GM12878 (cell line): ENCODE measurements at regions of chr1 and their contacts with region 1.

Region 1: DNA sequence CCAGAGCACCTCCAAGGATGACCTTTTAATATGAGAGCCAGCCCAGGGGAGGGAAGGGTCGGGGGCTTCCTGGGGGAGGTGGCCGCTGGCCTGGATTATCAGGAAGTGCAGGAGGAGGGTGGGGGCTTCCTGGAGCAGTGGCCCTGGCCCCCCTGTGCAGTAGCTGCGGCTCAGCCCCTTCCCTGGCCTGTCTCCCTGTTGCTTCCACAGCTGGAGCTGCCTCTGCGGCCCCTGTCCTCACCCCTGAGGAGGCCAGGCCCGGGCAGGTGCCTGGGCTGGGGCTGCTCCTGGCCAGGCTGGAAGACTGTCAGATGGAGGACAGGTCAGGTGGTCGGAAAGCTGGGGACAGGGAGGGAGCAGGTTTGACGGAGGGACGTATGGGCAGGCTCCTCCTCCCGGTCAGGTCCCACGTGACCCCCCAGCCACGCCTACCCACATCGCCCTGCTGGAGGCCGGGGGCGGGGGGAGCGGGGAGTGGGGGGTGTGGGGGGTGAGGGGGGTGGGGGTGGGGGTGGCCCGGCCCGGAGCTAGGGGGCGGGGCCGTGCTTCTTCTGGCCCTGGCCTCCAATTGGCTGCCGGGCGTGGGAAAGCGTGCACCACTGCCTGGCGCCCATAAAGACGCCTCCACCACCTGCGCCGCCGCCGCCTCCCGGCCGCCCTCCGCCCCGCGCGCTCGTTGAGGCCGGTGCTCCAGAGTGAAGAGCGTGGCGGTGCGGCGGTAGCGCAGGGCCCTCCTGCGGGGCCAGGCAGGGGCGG is 10.2 kb upstream of the TNFRSF14 start:
- DNase-seq: peak; percentile 80
- ATAC-seq: peak; percentile 61
- H3K4me3 ChIP-seq: peak overlapping the region; percentile 82; the same call in 1 of the 2 replicates
- H3K27ac ChIP-seq: peak overlapping the region; percentile 96
- H3K4me1 ChIP-seq: peaks cover 31% of the 10 kb centered on the region
- H3K27me3 ChIP-seq: no peaks in the 10 kb centered on the region
- CTCF ChIP-seq: no peak
- EP300 ChIP-seq: no peak
- POLR2A ChIP-seq: peak; percentile 96
- RAD21 ChIP-seq: no peak

Region 2: GRCh38 chr1:1325288-1326074 is 1220.5 kb before region 1 on chr1:
- CTCF ChIA-PET with region 1: no interaction called
- POLR2A ChIA-PET with region 1: no interaction called
- RAD21 ChIA-PET with region 1: no interaction called
- SMC1A ChIA-PET with region 1: no interaction called
- in situ Hi-C with region 1: no loop called
- intact Hi-C with region 1: no loop called
- DNase-seq: no peak
- ATAC-seq: peak; percentile 4
- H3K4me3 ChIP-seq: peak overlapping the region; percentile 87
- H3K27ac ChIP-seq: peak overlapping the region; percentile 82
- H3K4me1 ChIP-seq: peaks cover 10% of the 10 kb centered on the region
- H3K27me3 ChIP-seq: no peaks in the 10 kb centered on the region
- CTCF ChIP-seq: no peak
- EP300 ChIP-seq: no peak
- POLR2A ChIP-seq: no peak
- RAD21 ChIP-seq: no peak

Region 3: DNA sequence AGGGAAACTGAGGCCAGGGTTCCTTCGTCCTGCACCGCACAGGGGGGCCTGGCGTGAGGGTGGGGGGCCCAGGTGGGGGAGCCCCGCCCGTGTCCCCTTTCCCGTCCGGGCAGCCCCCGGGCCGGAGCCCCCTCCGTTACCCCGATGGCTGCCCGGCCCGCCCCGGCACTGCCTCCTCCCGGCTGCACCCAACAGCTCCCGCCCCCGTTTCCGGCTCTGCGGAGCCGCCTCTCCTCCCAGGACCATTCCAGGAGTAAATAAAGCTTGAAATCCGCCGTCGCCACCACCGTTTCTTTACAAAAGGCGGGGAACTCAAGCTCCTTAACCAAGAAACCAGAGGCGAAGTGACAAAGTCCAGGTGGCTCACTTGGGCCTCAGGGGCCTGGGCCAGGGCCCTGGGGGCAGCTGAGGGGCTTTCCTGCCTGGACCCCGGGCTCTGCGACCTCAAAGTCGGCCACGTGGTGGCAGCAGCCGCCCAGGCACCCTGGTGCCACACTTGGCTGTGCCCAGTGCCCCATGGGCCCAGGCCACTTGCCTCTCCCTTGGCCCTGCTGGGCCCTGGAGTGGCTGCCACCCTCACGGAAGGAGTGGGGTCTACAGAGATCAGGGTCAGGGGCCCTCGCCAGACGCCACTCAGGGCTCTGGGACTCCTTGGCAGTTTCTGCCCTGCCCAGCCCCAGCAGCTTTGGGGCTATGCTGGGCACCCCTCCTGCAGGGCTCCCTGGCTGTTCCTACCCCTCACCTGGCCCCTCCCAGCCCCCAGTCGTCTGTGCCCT is 350.9 kb before region 1 on chr1:
- CTCF ChIA-PET with region 1: interaction called, 23 read pairs
- POLR2A ChIA-PET with region 1: interaction called, 5 read pairs
- RAD21 ChIA-PET with region 1: interaction called, 12 read pairs
- SMC1A ChIA-PET with region 1: no interaction called
- in situ Hi-C with region 1: no loop called
- intact Hi-C with region 1: loop called (anchors 2 kb)
- DNase-seq: peak; percentile 43
- ATAC-seq: peak; percentile 91
- H3K4me3 ChIP-seq: peak overlapping the region; percentile 61
- H3K27ac ChIP-seq: peak overlapping the region; percentile 89
- H3K4me1 ChIP-seq: peaks cover 10% of the 10 kb centered on the region
- H3K27me3 ChIP-seq: no peaks in the 10 kb centered on the region
- CTCF ChIP-seq: peak; percentile 90 to 92 (median 91); a peak in 5 of 6 replicates
- EP300 ChIP-seq: no peak
- POLR2A ChIP-seq: peak; percentile 54
- RAD21 ChIP-seq: peak; percentile 89

Region 4: DNA sequence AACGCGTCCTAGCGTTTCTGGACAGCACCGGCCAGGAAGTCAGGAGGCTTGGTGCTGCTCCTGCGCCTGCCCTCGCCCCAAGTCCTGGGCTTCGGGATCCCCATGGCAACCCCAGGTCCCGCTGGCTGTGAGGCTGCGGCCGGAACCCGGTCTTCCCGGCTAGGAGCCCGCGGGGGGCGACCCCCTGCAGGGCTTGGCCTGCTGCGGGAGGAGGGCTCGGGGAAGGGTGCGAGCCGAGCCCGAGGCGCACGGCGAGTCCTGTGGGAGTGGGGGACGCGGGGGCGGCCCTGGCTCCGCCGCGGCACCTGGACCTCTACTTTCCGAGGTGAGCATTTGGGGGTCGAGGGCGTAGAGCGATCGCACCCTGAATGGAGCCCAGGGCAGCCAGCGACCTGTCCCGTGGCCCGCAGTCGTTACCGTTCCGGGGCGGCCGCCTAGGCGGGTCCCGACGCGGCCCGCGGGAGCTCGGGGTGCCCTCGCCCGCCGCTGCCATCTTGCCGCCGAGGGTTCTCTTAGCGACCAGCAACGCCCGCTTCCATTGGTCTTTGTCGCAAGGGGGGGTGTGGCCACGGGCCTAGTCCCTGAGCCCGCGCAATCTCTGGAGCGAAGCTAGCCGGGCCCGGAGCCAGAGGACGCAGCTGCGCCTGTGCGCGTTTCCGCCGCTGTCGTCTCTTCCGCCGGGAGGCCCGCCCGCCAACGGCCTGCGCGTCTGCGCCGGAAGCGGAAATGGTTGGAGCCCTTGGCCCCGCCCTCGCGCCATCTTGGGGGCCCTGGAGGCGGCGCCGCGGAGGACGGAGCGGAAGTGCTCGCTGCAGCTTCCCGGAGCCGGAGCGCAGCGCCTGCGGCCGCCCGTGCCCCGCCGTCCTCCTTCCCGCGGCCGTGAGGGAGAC is 154.7 kb before region 1 on chr1 and contains the starts of genes MORN1 and RER1:
- CTCF ChIA-PET with region 1: interaction called, 5 read pairs
- POLR2A ChIA-PET with region 1: interaction called, 4 read pairs
- RAD21 ChIA-PET with region 1: interaction called, 12 read pairs
- SMC1A ChIA-PET with region 1: no interaction called
- in situ Hi-C with region 1: no loop called
- intact Hi-C with region 1: no loop called
- DNase-seq: peak; percentile 93
- ATAC-seq: peak; percentile 97
- H3K4me3 ChIP-seq: peak within 1 kb of the TSS; percentile 98
- H3K27ac ChIP-seq: peak within 1 kb of the TSS; percentile 71
- H3K4me1 ChIP-seq: peaks cover 42% of the 10 kb centered on the region
- H3K27me3 ChIP-seq: no peaks in the 10 kb centered on the region
- CTCF ChIP-seq: no peak
- EP300 ChIP-seq: no peak
- POLR2A ChIP-seq: peak; percentile 96
- RAD21 ChIP-seq: no peak
- polyA plus RNA-seq, gene MORN1: 0.76 to 1.8 TPM
- polyA plus RNA-seq, gene RER1: 29.2 to 48.5 TPM

Region 5: GRCh38 chr1:2515763-2516080 is 30.2 kb before region 1 on chr1:
- CTCF ChIA-PET with region 1: no interaction called
- POLR2A ChIA-PET with region 1: no interaction called
- RAD21 ChIA-PET with region 1: no interaction called
- SMC1A ChIA-PET with region 1: no interaction called
- in situ Hi-C with region 1: no loop called
- intact Hi-C with region 1: no loop called
- DNase-seq: no peak
- ATAC-seq: no peak
- H3K4me3 ChIP-seq: no peak overlapping the region
- H3K27ac ChIP-seq: no peak overlapping the region
- H3K4me1 ChIP-seq: no peaks in the 10 kb centered on the region
- H3K27me3 ChIP-seq: no peaks in the 10 kb centered on the region
- CTCF ChIP-seq: no peak
- EP300 ChIP-seq: no peak
- POLR2A ChIP-seq: no peak
- RAD21 ChIP-seq: no peak

Region 6: DNA sequence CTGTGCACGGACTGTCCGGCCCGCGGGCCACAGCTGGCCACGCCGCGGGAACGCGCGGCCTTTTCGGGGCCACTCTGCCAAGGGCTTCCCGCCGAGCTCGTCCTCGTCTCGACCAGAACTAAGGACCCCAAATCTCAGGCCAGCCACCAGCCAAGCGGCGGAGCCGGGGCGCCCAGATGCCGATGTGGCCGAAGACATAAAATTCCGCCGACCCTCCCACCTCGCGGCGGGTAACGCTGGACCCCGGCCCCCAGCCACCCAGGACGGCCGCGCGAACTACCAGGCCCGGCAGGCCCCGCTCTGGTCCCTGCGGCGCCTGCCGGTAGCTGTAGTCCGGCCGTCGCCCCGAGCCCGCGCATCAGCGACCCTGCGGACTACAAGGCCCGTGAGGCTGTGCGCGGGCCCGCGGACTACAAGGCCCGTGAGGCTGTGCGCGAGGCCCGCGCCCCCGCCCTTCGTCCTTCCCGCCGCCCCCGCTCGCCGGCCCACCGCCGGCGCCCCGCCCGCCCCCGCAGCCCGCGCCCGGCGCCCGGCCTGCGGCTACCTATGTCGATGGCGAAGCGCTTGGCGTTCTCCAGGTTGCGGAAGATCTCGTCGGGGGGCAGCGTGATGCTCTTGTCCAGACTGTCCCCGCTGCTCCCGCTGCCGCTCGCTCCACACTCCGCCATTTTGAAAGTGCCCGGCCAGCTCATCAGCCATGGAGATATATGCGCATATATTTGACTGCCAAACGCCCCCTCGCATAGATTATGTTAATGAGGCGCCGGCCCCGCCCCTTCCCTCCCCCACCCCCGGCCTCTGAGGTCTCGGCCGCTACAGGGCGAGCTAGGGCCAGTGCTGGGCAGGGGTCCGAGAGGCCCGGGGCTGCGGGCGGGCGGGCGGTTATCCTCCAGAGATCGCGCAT is 19.8 kb before region 1 on chr1 and contains the start of gene PANK4:
- CTCF ChIA-PET with region 1: interaction called, 28 read pairs
- POLR2A ChIA-PET with region 1: interaction called, 22 read pairs
- RAD21 ChIA-PET with region 1: interaction called, 86 read pairs
- SMC1A ChIA-PET with region 1: interaction called, 15 read pairs
- in situ Hi-C with region 1: no loop called
- intact Hi-C with region 1: loop called (anchors 1 kb)
- DNase-seq: no peak
- ATAC-seq: peak; percentile 89
- H3K4me3 ChIP-seq: peak within 1 kb of the TSS; percentile 98
- H3K27ac ChIP-seq: peak within 1 kb of the TSS; percentile 47
- H3K4me1 ChIP-seq: peaks cover 25% of the 10 kb centered on the region
- H3K27me3 ChIP-seq: peaks cover 4 to 14% of the 10 kb centered on the region in 2 experiments; a peak in 3 of 4 replicates
- CTCF ChIP-seq: no peak
- EP300 ChIP-seq: no peak
- POLR2A ChIP-seq: peak; percentile 91
- RAD21 ChIP-seq: no peak
- polyA plus RNA-seq, gene PANK4: 0.35 to 1.5 TPM

Region 7: GRCh38 chr1:2575801-2576663 is 30.1 kb after region 1 on chr1:
- CTCF ChIA-PET with region 1: interaction called, 8 read pairs
- POLR2A ChIA-PET with region 1: interaction called, 62 read pairs
- RAD21 ChIA-PET with region 1: interaction called, 35 read pairs
- SMC1A ChIA-PET with region 1: interaction called, 19 read pairs
- in situ Hi-C with region 1: loop called (anchors 5 kb)
- intact Hi-C with region 1: no loop called
- DNase-seq: no peak
- ATAC-seq: no peak; the same call in 2 of the 3 replicates
- H3K4me3 ChIP-seq: peak overlapping the region; percentile 59; the same call in 1 of the 2 replicates
- H3K27ac ChIP-seq: peak overlapping the region; percentile 99
- H3K4me1 ChIP-seq: peaks cover 46% of the 10 kb centered on the region
- H3K27me3 ChIP-seq: no peaks in the 10 kb centered on the region
- CTCF ChIP-seq: no peak
- EP300 ChIP-seq: no peak
- POLR2A ChIP-seq: no peak; the same call in 1 of the 2 replicates
- RAD21 ChIP-seq: no peak